PC-9 (cell line): ENCODE measurements at regions of chrX and their contacts with region 1.

Region 1: GRCh38 chrX:121579016-121579760 is 531.8 kb downstream of the GLUD2 start:
- DNase-seq: peak in 1 of 2 experiments; percentile 14
- H3K4me3 ChIP-seq: no peak overlapping the region
- H3K27ac ChIP-seq: no peak overlapping the region
- H3K4me1 ChIP-seq: no peaks in the 10 kb centered on the region
- H3K27me3 ChIP-seq: no peaks in the 10 kb centered on the region
- CTCF ChIP-seq: peak; percentile 67

Region 2: GRCh38 chrX:120499301-120500072 is 1079.7 kb before region 1 on chrX:
- CTCF ChIA-PET with region 1: no interaction called
- POLR2A ChIA-PET with region 1: no interaction called
- intact Hi-C with region 1: loop called (anchors 5 kb)
- DNase-seq: no peak
- H3K4me3 ChIP-seq: no peak overlapping the region
- H3K27ac ChIP-seq: no peak overlapping the region
- H3K4me1 ChIP-seq: peaks cover 9% of the 10 kb centered on the region
- H3K27me3 ChIP-seq: no peaks in the 10 kb centered on the region
- CTCF ChIP-seq: no peak

Region 3: GRCh38 chrX:120790118-120790517 is 789.1 kb before region 1 on chrX:
- CTCF ChIA-PET with region 1: no interaction called
- POLR2A ChIA-PET with region 1: no interaction called
- intact Hi-C with region 1: loop called (anchors 2 kb)
- DNase-seq: peak; percentile 23 to 59
- H3K4me3 ChIP-seq: no peak overlapping the region
- H3K27ac ChIP-seq: no peak overlapping the region
- H3K4me1 ChIP-seq: peaks cover 25% of the 10 kb centered on the region
- H3K27me3 ChIP-seq: no peaks in the 10 kb centered on the region
- CTCF ChIP-seq: peak; percentile 87

Region 4: GRCh38 chrX:121191779-121192178 is 387.4 kb before region 1 on chrX:
- CTCF ChIA-PET with region 1: interaction called, 4 read pairs
- POLR2A ChIA-PET with region 1: no interaction called
- intact Hi-C with region 1: loop called (anchors 10 kb)
- DNase-seq: peak in 1 of 2 experiments; percentile 48
- H3K4me3 ChIP-seq: no peak overlapping the region
- H3K27ac ChIP-seq: no peak overlapping the region
- H3K4me1 ChIP-seq: no peaks in the 10 kb centered on the region
- H3K27me3 ChIP-seq: no peaks in the 10 kb centered on the region
- CTCF ChIP-seq: no peak

Region 5: DNA sequence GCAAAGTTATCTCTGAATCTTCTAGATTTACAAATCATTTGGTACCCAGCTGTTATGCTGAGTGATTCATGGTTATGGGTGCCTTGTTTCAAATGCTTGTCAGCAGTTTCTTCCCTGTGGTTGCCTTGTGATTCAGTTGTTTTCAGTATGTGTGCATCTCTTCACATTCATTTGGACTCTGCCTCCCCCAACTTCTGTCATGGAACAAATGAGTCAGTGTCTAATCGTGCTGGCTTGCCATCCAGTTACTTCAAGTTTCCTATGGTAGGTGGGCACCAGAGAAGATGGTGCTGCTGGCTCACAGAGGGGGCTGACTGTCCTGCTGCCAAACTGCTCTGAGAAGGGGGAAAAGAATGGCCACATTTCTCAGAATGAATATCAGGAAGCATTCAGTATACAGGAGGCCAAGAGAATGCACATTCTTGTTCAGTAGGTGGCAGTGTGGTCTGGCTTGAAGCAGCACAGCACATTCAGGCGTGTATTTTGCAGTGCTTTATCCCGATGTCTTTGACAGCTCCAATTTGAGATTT is 270.8 kb before region 1 on chrX:
- CTCF ChIA-PET with region 1: interaction called, 4 read pairs
- POLR2A ChIA-PET with region 1: no interaction called
- intact Hi-C with region 1: loop called (anchors 2 kb)
- DNase-seq: peak in 1 of 2 experiments; percentile 17
- H3K4me3 ChIP-seq: no peak overlapping the region
- H3K27ac ChIP-seq: no peak overlapping the region
- H3K4me1 ChIP-seq: no peaks in the 10 kb centered on the region
- H3K27me3 ChIP-seq: no peaks in the 10 kb centered on the region
- CTCF ChIP-seq: peak; percentile 62

Region 6: GRCh38 chrX:121710422-121710821 is 131.2 kb after region 1 on chrX:
- CTCF ChIA-PET with region 1: no interaction called
- POLR2A ChIA-PET with region 1: no interaction called
- intact Hi-C with region 1: no loop called
- DNase-seq: no peak
- H3K4me3 ChIP-seq: no peak overlapping the region
- H3K27ac ChIP-seq: no peak overlapping the region
- H3K4me1 ChIP-seq: no peaks in the 10 kb centered on the region
- H3K27me3 ChIP-seq: no peaks in the 10 kb centered on the region
- CTCF ChIP-seq: no peak